ENCODE measurements at regions of chr1 and their contacts with region 1.

Region 1: DNA sequence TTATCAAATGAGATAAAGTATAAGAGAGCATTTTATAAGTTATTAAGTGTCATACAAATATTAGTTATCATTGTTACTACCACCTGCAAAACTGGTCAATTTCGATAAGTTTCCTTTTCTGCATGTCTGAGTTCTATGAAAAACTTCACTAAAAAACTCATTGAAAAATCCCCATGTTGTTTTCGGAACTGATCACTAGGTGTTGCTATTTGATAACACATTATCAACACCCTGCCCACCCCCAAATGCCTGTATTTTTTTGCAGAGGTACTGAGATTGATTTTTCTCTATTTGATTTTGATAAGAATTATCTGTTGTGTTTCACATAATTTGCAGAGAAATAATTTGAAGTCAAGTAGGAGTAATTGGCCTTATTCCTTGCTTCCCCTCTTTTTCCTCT is 22.1 kb upstream of the DISP1 start:
- DNase-seq: peak; percentile 46

Region 2: DNA sequence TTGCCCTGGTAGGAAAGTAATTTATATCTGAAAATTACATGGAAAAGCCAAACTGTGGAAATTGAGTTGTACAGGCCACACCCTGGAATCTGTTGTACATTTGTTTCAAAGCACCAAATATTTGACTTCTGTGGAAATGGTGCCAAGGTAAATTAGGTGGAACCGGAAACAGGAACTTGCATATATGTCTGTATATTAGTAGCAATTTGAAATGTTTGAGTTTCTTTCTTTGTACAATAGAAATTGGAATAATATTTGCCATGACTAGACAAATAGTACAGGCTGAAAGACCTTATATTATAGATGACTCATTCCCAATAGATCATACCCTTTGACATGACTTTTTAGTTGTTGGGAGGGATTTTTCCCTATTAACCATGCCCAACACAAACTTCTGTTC is 192.5 kb before region 1 on chr1:
- in situ Hi-C with region 1: no loop called
- DNase-seq: no peak

Region 3: GRCh38 chr1:222938986-222939385 is 146.2 kb after region 1 on chr1:
- in situ Hi-C with region 1: no loop called
- DNase-seq: no peak

Region 4: DNA sequence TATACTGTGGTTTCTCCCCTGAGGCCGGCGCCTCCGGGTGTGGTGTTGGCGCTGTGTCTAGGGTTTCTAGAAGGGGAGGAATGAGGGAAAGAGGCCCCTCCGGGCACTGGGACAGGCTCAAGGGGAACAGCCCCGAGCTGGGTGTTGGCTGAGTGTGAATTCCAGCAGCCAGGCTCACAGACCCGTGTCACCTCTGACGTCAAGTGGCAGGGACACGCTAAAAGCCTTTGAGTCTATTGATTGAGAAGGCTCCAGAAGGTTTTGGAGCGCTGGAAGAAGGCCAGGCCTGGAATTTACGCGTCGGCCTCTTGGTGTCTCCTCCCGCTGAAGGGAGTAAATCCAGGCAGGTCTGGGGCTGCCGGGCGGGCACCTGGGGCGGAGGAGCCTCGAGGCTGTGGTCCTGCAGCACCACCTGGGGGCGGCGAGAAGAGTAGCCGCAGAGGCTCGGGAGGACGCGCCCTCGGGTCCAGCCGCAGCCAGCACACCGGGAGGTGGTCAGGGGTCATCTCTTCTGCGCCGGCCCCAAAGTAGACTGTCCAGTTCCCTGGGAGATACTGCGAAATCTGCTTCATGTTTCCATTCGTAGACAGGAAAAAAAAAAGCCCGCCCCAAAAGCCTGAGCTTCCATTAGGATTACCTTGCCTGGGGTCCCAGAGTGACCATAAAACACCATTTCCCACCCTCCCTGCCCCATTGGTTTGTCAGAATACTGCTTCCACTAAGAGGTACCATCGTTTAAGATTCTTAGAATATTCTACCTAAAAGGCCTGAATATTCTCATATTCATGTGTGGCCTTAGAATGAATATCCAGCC is 288.6 kb after region 1 on chr1:
- in situ Hi-C with region 1: loop called (anchors 10 kb)
- DNase-seq: peak; percentile 96

Measured in ACHN (cell line).